Endothelial cell of umbilical vein (primary cell): ENCODE measurements at regions of chr18 and their contacts with region 1.

Region 1: GRCh38 chr18:46060359-46060841 is 11.7 kb downstream of the PSTPIP2 start:
- DNase-seq: no peak
- H3K4me3 ChIP-seq: no peak overlapping the region
- H3K27ac ChIP-seq: no peak overlapping the region
- H3K4me1 ChIP-seq: no peaks in the 10 kb centered on the region
- H3K27me3 ChIP-seq: no peaks in the 10 kb centered on the region
- CTCF ChIP-seq: no peak
- POLR2A ChIP-seq: no peak

Region 2: DNA sequence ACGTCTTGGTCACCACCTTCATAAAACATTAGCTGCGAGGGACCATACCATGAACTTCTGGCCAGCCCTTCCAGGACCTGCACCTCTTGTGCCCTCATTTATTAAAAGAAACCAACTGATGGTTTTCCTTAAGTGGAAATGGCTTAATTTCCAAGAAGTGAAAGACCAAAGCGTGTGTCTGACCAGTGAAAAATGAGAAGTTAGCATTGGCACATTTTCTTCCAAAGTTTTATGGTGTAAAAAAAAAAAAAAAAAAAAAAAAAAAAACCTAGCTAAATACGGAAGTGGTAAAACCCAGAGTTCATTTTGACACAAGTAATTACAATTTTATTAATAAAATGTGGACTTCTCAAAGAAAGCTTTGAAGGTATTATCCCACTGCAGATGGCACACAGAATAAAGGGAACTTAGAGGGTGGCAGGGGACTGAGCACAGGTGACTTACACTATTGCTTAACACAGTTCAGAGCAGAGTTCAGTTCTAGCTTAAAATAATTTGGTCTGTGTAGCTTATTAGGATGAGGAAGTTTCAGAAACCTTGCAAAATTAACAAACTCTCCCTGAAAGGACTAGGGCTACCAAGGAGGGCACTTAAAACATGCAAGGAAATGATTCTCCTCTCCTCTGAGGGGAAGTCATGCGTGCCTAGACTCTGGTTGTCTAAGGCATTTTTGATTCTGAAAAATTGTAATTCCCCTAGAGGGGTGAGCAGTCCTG is 51.1 kb before region 1 on chr18:
- CTCF ChIA-PET with region 1: no interaction called
- POLR2A ChIA-PET with region 1: no interaction called
- dilution Hi-C with region 1: no loop called
- intact Hi-C with region 1: loop called (anchors 2 kb)
- DNase-seq: no peak
- H3K4me3 ChIP-seq: no peak overlapping the region
- H3K27ac ChIP-seq: no peak overlapping the region
- H3K4me1 ChIP-seq: no peaks in the 10 kb centered on the region
- H3K27me3 ChIP-seq: no peaks in the 10 kb centered on the region
- CTCF ChIP-seq: no peak
- POLR2A ChIP-seq: no peak